Mammary epithelial cell (primary cell): ENCODE measurements at regions of chr5 and their contacts with region 1.

Region 1: DNA sequence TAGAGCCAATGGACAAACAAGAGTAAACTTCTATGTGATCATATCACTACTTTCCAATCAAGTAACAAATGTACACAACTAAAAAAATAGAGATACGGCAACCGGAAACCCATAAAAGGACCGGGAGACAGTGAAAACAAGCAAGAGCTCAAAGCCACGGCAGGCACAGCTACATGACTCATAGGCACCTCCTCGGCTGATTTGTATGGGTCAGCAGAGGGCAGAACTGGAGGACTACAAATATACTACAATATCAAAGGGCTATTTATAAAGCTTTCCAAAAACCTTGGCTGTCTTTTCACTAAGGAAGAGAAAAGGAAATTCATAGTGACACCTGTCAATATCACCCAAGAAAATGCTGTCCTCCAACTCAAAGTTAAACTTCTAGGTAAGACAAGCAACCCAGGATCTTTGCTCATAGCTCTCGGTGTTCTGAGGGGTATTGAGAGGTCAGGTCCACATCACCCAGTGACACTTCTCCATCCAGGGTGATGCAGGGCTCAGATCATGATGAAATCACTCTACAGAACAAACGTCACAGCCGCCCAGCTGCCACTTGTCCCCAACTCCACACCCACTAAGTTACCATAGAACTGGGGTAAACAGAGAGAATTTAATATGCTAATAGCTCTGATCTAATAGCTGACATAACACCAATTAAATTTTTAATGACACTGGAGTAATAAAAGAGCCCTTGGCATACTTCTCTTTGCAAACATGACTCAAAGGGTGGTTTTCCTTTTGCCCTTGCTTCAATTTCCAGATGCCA is 41.3 kb downstream of the PFDN1 start:
- DNase-seq: peak; percentile 80
- H3K4me3 ChIP-seq: no peak overlapping the region
- H3K27ac ChIP-seq: peak overlapping the region; percentile 99
- H3K4me1 ChIP-seq: peaks cover 48% of the 10 kb centered on the region
- H3K27me3 ChIP-seq: no peaks in the 10 kb centered on the region
- CTCF ChIP-seq: peak in 1 of 2 donors; percentile 19

Region 2: GRCh38 chr5:140302786-140303639 is 41.4 kb after region 1 on chr5 and contains the start of gene PFDN1:
- CTCF ChIA-PET with region 1: interaction called, 4 read pairs
- dilution Hi-C with region 1: no loop called
- in situ Hi-C with region 1: no loop called
- intact Hi-C with region 1: loop called (anchors 2 kb)
- DNase-seq: peak; percentile 92
- H3K4me3 ChIP-seq: peak within 1 kb of the TSS; percentile 89 to 91 (median 91)
- H3K27ac ChIP-seq: peak within 1 kb of the TSS; percentile 91
- H3K4me1 ChIP-seq: peaks cover 21% of the 10 kb centered on the region
- H3K27me3 ChIP-seq: no peaks in the 10 kb centered on the region
- CTCF ChIP-seq: no peak
- total RNA-seq, gene PFDN1: 64.0 to 65.0 TPM

Region 3: GRCh38 chr5:140312067-140312790 is 50.6 kb after region 1 on chr5:
- CTCF ChIA-PET with region 1: no interaction called
- dilution Hi-C with region 1: loop called (anchors 5 kb)
- in situ Hi-C with region 1: no loop called
- intact Hi-C with region 1: loop called (anchors 1 kb)
- DNase-seq: peak; percentile 98
- H3K4me3 ChIP-seq: no peak overlapping the region
- H3K27ac ChIP-seq: peak overlapping the region; percentile 94
- H3K4me1 ChIP-seq: peaks cover 27% of the 10 kb centered on the region
- H3K27me3 ChIP-seq: no peaks in the 10 kb centered on the region
- CTCF ChIP-seq: no peak